ENCODE measurements at regions of chr12 and their contacts with region 1.

Region 1: GRCh38 chr12:117587631-117588287 is 226.3 kb upstream of the NOS1 start:
- DNase-seq: peak; percentile 47
- H3K4me3 Mint-ChIP-seq: no peak overlapping the region
- H3K27ac Mint-ChIP-seq: no peak overlapping the region
- H3K4me1 Mint-ChIP-seq: no peaks in the 10 kb centered on the region
- H3K27me3 Mint-ChIP-seq: peaks cover 4% of the 10 kb centered on the region

Region 2: DNA sequence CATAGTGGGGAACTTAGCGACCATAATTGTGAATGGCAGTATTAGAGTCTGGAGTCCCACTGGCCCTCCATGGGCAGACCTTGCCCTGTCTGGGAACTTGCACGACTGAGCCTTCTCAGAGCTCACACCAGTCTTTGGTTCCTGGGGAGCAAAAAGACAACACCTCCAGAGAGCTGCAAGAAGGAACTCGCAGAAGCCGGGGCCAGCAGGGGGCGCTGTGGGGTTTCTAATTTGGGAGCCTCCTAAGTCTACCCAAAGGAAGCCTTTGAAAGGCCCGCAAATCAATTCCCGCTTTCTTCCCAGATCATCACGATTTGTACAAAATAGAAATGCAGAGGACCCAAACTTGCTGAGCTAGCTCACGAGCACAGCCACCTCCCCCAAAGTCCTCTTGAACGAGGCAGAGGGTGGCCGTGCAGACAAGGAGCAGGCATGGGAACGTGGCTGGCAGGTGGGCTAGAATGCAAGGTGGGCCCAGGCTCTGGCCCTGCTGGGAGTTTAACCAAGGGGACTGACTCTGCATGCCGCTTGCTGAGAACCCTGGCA is 351.2 kb before region 1 on chr12:
- CTCF ChIA-PET with region 1: interaction called, 19 read pairs
- POLR2A ChIA-PET with region 1: no interaction called
- DNase-seq: peak; percentile 78
- H3K4me3 Mint-ChIP-seq: no peak overlapping the region
- H3K27ac Mint-ChIP-seq: no peak overlapping the region
- H3K4me1 Mint-ChIP-seq: no peaks in the 10 kb centered on the region
- H3K27me3 Mint-ChIP-seq: no peaks in the 10 kb centered on the region

Region 3: DNA sequence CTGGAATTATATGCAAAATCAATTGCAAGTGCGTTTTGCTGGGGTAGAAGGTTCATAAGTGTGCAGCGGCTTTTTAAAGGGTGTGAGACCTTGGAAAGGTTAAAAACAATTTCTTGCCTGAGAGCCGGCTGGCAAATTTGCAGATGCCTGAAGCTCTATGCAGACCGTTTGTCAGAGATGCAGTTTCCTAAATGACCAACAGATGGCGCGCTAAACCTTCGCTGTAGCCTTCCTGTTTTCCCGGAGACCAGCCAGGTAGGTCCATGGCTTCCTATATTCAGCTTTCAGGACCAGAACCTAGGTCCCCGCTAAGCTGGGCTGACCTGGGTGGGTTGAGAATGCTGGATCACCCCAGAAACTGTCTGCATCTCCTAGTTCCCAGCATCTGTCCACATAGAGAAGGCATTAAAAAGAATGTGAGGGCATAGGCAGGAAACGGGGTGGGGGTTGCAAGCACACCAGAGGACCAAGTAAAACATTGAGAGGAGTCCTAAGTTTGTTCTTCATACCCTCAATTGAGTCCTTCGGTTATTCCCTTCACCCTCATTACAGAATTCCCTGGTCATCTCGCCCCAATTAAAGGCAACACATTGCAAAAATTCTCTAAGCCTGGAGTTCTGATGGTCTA is 220.6 kb before region 1 on chr12:
- CTCF ChIA-PET with region 1: interaction called, 27 read pairs
- POLR2A ChIA-PET with region 1: no interaction called
- DNase-seq: peak; percentile 56
- H3K4me3 Mint-ChIP-seq: no peak overlapping the region
- H3K27ac Mint-ChIP-seq: no peak overlapping the region
- H3K4me1 Mint-ChIP-seq: no peaks in the 10 kb centered on the region
- H3K27me3 Mint-ChIP-seq: peaks cover 22% of the 10 kb centered on the region

Region 4: DNA sequence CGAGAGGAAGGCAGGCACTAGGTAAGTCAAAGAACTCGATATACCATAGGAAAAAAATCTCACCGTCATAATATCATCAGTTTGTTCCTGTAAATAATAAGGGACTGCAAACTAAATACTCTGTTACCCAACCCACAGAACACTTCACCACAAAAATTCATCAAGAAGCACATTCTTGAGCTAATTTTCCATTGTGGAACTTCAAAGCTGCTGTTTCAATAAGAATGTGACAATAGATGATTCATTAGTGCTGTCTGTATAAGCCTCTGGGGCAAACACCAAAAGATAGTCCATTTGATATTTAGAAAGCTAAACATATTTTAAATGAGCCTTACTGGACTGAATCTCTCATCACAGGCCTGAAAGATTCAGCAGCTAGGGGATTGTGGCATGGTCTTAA is 161.7 kb after region 1 on chr12:
- CTCF ChIA-PET with region 1: no interaction called
- POLR2A ChIA-PET with region 1: no interaction called
- DNase-seq: no peak
- H3K4me3 Mint-ChIP-seq: no peak overlapping the region
- H3K27ac Mint-ChIP-seq: no peak overlapping the region
- H3K4me1 Mint-ChIP-seq: no peaks in the 10 kb centered on the region
- H3K27me3 Mint-ChIP-seq: no peaks in the 10 kb centered on the region

Measured in activated CD4-positive, alpha-beta memory T cell treated with anti-CD3 and anti-CD28 coated beads, Interleukin-2, amount 10 ng/mL, durations not matched to agents 7 days and 5 days (primary cell).